Thyroid gland (tissue), 4 donors: ENCODE measurements at regions of chr1 and their contacts with region 1.

Region 1: GRCh38 chr1:33256701-33257399 is 558 bp downstream of the ZNF362 start:
- DNase-seq: peak; percentile 55 to 56
- H3K4me3 ChIP-seq: peak overlapping the region in 2 of 3 donors; percentile 44 to 58
- H3K27ac ChIP-seq: peak overlapping the region; percentile 75 to 86 (median 83)
- H3K4me1 ChIP-seq: peaks cover 25 to 46% of the 10 kb centered on the region in 2 donors
- H3K27me3 ChIP-seq: no peaks in the 10 kb centered on the region
- CTCF ChIP-seq: no peak
- POLR2A ChIP-seq: no peak

Region 2: DNA sequence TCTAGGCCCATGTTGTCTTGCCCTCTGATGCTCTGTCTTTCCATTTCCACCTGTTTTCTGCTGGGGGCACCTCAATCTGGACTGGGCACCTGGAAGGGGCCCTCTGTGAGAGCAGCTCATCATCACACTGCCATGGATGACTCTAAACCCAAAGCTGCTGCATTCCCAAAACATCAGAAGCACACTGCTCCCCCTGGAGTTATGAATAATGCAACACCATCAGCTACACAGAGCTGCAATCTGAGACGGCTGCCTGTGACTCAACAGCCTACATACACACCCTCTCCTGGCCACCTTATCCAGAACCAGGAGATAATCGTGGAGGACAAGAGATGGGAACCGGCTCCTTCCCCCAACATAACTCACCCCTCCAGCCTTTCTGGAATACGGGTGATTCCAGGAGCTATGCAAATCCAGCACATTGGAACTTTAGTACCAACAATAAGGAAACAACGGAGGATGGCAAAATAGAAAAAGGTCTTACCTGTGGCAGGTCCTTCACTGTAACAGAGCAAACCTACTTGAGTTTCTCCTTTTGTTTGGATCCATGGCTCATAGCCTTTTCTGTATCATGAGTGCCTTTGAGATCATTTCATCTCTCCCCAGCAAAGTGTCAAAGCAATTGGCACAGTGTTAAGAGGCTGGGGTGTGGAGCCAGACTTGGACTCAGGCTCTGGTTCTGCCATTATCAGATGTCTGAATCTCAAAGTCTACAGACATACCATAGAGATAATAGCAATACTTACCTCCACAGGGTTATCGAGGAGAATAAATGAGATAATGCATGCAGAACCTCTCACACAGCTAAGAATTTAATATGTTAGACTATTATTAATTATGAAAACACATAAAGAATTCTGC is 249.4 kb before region 1 on chr1:
- intact Hi-C with region 1: no loop called
- DNase-seq: no peak
- H3K4me3 ChIP-seq: no peak overlapping the region
- H3K27ac ChIP-seq: no peak overlapping the region
- H3K4me1 ChIP-seq: peaks cover 19 to 69% of the 10 kb centered on the region in 2 donors
- H3K27me3 ChIP-seq: no peaks in the 10 kb centered on the region
- CTCF ChIP-seq: peak in 2 of 6 experiments; percentile 8 to 27
- POLR2A ChIP-seq: no peak

Region 3: GRCh38 chr1:33147997-33148314 is 108.9 kb before region 1 on chr1:
- intact Hi-C with region 1: loop called (anchors 10 kb)
- DNase-seq: no peak
- H3K4me3 ChIP-seq: no peak overlapping the region
- H3K27ac ChIP-seq: no peak overlapping the region
- H3K4me1 ChIP-seq: peaks cover 0 to 3% of the 10 kb centered on the region in 2 donors
- H3K27me3 ChIP-seq: no peaks in the 10 kb centered on the region
- CTCF ChIP-seq: no peak
- POLR2A ChIP-seq: no peak